ENCODE measurements at regions of chr17 and their contacts with region 1.

Region 1: GRCh38 chr17:28644985-28645939 is at the start of gene BLTP2:
- DNase-seq: peak; percentile 98
- ATAC-seq: peak; percentile 98
- H3K4me3 Mint-ChIP-seq: peak within 1 kb of the TSS; percentile 86
- H3K27ac Mint-ChIP-seq: peak within 1 kb of the TSS; percentile 92
- H3K4me1 Mint-ChIP-seq: peaks cover 38% of the 10 kb centered on the region
- H3K27me3 Mint-ChIP-seq: no peaks in the 10 kb centered on the region
- total RNA-seq, gene BLTP2: 163 to 186 TPM

Region 2: DNA sequence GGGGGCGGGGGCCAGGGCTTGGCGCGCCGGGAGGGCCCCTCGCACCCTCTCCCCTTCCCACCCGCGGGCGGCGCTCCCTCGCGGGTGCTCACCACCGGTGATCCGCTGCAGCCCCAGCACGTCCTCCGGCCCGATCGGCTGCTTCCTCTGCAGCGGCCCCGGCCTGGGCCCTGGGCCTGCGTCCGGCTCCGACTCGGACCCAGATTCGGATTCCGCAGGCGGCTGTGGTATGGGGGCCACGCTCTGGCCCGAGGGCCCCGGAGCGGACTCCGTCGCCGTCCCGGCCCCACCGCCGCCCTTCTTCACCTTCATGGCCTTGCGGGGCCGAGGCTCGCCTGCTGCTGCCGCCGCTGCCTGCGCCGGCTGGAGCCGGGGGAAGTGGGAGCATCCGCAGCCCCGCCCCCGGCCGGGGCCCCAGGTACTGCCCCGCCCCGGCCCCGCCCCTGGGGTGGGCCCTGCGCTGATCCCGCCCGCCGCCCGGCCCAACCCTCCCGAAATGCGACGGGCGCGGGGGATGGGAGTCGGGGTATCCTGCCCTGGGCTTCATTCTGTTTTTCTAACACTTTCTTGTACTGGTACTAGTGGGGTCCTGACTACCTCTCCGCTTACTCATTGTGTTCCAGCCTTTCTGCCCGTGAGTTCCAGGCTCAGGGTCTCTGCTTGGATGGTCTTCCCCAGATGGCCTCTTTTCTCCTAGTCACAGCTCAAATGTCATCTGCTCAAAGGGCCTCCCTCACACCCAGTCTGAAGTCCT is 92.8 kb before region 1 on chr17 and contains the start of gene UNC119:
- CTCF ChIA-PET with region 1: no interaction called
- DNase-seq: peak; percentile 84
- ATAC-seq: peak; percentile 88
- H3K4me3 Mint-ChIP-seq: peak within 1 kb of the TSS; percentile 78
- H3K27ac Mint-ChIP-seq: peak within 1 kb of the TSS; percentile 71
- H3K4me1 Mint-ChIP-seq: peaks cover 43% of the 10 kb centered on the region
- H3K27me3 Mint-ChIP-seq: no peaks in the 10 kb centered on the region
- total RNA-seq, gene UNC119: 41.2 to 59.0 TPM

Region 3: DNA sequence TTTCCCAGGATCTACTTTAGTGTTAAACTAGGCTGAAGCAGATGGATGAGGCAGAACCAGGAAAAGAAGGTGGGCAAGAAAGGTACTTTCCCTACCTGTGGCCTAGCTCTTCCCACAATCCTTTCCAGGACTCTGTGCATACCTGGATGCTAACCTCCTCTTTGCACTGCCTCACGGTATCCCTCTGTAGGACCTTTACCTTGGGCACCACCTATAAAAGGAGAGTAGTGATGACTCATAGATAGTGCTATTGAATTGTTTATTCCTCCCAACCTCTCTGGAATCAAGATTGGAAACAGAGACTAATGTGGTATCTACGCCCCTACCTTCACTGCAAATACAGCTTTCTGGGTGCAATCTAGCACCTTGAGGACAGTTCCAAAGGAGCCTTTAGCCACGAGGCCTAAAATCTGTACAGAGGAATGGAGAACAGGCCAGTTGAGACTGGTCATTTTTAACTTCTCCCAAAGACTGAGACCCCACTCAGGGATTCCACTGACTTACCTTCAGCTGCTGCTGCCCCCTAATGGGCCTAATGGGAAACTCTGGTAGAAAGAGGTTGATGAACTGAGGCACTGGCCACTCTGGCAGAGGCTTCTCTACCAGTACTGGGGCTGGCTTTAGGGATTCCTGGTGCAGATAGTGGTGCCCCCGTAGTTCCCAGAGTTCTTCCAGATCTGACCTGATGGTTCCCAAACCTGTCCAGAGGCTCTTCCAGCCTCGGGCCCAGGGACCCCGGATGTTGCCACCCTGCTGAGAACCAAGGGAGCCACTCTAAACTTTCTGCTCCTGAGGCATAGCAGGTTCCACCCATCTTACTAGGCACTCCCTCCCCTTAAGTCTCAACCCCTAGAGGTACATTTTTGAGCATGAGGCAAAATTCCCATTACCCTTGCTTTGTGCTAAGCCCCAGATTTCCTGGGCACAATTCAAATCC is 32.1 kb before region 1 on chr17:
- CTCF ChIA-PET with region 1: interaction called, 10 read pairs
- DNase-seq: peak; percentile 50
- ATAC-seq: peak; percentile 63
- H3K4me3 Mint-ChIP-seq: no peak overlapping the region
- H3K27ac Mint-ChIP-seq: peak overlapping the region; percentile 47
- H3K4me1 Mint-ChIP-seq: no peaks in the 10 kb centered on the region
- H3K27me3 Mint-ChIP-seq: no peaks in the 10 kb centered on the region

Region 4: GRCh38 chr17:28661635-28662537 is 16.6 kb after region 1 on chr17 and contains the starts of genes SDF2 and SUPT6H:
- CTCF ChIA-PET with region 1: interaction called, 102 read pairs
- DNase-seq: peak; percentile 95
- ATAC-seq: peak; percentile 90
- H3K4me3 Mint-ChIP-seq: peak within 1 kb of the TSS; percentile 97
- H3K27ac Mint-ChIP-seq: peak within 1 kb of the TSS; percentile 99
- H3K4me1 Mint-ChIP-seq: peaks cover 48% of the 10 kb centered on the region
- H3K27me3 Mint-ChIP-seq: no peaks in the 10 kb centered on the region
- total RNA-seq, gene SDF2: 45.9 to 48.9 TPM
- total RNA-seq, gene SUPT6H: 64.7 to 81.2 TPM

Region 5: DNA sequence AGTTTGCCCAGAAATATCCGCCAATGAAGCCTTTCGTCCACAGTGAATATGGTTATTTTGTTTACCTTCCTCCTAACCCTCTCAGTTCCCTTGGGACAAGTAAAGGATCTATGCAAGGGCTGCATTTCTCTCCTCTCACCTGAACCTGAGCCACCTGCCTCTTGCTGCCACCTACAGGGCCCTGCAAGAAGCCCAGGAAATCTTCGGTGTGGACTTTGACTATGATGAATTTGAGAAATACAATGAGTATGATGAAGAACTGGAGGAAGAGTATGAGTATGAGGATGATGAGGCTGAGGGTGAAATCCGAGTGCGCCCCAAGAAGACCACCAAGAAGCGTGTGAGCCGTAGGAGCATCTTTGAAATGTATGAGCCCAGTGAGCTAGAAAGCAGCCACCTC is 30.7 kb after region 1 on chr17:
- CTCF ChIA-PET with region 1: interaction called, 39 read pairs
- DNase-seq: no peak
- ATAC-seq: no peak
- H3K4me3 Mint-ChIP-seq: no peak overlapping the region
- H3K27ac Mint-ChIP-seq: no peak overlapping the region
- H3K4me1 Mint-ChIP-seq: no peaks in the 10 kb centered on the region
- H3K27me3 Mint-ChIP-seq: no peaks in the 10 kb centered on the region

Region 6: DNA sequence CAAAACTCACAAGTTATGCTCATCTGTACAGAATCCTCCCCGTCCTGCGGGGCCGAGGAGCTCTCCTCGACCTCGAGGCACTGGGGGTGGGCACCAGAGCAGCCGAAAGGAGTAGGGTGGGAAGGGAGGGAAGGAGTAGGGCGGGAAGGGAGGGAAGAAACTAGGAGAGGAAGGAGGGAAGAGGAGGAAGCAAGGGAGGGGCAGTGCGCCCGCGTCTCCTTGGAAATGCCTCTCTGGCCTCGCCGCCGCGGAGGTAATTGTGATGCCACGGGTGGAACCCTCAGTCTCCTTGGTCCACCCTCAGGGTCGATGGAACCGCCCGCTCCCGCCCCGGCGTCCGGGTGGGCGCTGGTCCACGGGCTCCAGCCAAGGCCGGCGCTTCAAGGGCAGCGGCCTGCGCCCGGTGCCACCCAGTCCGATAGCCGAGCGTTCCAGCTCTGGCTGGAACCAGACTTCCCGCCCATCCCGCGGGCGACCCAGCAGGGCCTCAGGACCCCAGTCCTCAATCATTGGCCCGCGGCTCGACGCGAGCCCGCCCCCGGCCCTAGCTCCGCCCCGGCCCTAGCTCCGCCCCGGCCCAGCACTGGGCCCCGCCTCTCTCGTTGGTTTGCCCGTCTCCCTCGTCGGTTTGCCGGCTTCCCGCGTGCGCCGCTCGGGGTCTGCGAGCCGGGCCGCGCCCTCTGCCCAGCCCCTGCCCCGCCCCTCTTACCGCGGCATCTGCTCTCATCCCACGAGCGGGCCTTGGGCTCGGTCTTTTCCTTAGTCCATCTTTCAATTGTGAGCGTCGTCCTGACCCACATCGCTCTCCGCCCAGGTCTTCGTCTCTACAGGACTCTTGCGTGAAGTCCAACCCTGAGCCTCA is 65.8 kb after region 1 on chr17:
- CTCF ChIA-PET with region 1: interaction called, 13 read pairs
- DNase-seq: peak; percentile 92
- ATAC-seq: peak; percentile 93
- H3K4me3 Mint-ChIP-seq: peak overlapping the region; percentile 81
- H3K27ac Mint-ChIP-seq: peak overlapping the region; percentile 93
- H3K4me1 Mint-ChIP-seq: peaks cover 17% of the 10 kb centered on the region
- H3K27me3 Mint-ChIP-seq: peaks cover 19% of the 10 kb centered on the region

Region 7: GRCh38 chr17:28717578-28718333 is 72.5 kb after region 1 on chr17 and contains the start of gene RAB34:
- CTCF ChIA-PET with region 1: interaction called, 29 read pairs
- DNase-seq: no peak
- ATAC-seq: no peak
- H3K4me3 Mint-ChIP-seq: peak within 1 kb of the TSS; percentile 40
- H3K27ac Mint-ChIP-seq: peak within 1 kb of the TSS; percentile 24
- H3K4me1 Mint-ChIP-seq: peaks cover 29% of the 10 kb centered on the region
- H3K27me3 Mint-ChIP-seq: peaks cover 36% of the 10 kb centered on the region
- total RNA-seq, gene RAB34: 5.6 to 8.3 TPM

Region 8: DNA sequence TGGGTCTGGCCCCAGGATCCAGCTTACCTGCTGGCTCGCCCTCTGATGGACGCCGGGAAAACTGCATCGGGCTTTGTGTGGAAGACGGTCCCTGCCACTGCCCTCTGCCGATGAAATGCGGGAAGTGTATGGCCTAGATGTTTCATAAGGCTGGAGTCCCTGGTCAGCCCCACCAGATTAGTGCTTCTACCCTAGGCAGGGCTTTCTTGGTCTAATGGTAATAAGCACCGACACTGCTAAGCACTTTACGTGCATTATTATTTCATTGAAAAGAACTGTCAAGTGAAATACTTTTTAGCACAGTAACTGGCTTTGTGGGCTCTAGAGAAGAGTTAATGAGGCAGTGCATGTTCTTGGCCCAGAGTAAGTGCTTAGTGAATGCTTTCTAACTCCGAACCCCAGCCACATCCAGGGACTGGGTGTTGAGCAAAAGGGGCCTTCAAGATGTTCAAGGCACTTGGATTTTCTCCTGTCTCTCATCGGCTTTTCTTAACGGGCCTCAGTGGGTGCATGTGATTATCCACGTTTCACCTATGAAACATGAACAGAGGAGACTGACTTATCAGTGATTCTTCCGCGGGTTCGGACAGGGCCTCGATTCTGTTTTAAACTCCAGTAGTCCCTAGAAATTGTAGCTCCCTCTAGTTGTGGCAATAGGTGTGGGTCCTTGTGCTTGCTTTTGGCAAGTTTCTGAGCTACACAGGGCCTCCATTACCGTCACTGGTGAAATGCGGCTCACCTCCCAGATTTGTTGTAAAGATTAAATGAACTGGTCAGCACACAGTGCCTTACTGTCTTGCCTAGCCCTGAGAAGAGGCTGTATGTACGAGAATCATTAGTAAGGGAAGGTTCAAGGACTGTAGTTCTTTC is 105.2 kb after region 1 on chr17:
- CTCF ChIA-PET with region 1: interaction called, 12 read pairs
- DNase-seq: peak; percentile 93
- ATAC-seq: peak; percentile 88
- H3K4me3 Mint-ChIP-seq: no peak overlapping the region
- H3K27ac Mint-ChIP-seq: no peak overlapping the region
- H3K4me1 Mint-ChIP-seq: peaks cover 34% of the 10 kb centered on the region
- H3K27me3 Mint-ChIP-seq: no peaks in the 10 kb centered on the region

Measured in activated CD8-positive, alpha-beta memory T cell treated with anti-CD3 and anti-CD28 coated beads, Interleukin-2, amount 10 ng/mL, durations not matched to agents 7 days and 5 days (primary cell).